ENCODE measurements at regions of chr1 and their contacts with region 1.

Region 1: GRCh38 chr1:166197141-166197540 is 30.3 kb upstream of the FAM78B start:
- DNase-seq: peak; percentile 35
- H3K4me3 Mint-ChIP-seq: no peak overlapping the region
- H3K27ac Mint-ChIP-seq: peak overlapping the region; percentile 7
- H3K4me1 Mint-ChIP-seq: peaks cover 16% of the 10 kb centered on the region
- H3K27me3 Mint-ChIP-seq: peaks cover 12% of the 10 kb centered on the region
- CTCF ChIP-seq: no peak

Region 2: GRCh38 chr1:166029196-166029945 is 167.8 kb before region 1 on chr1:
- CTCF ChIA-PET with region 1: no interaction called
- intact Hi-C with region 1: no loop called
- DNase-seq: no peak
- H3K4me3 Mint-ChIP-seq: no peak overlapping the region
- H3K27ac Mint-ChIP-seq: no peak overlapping the region
- H3K4me1 Mint-ChIP-seq: no peaks in the 10 kb centered on the region
- H3K27me3 Mint-ChIP-seq: peaks cover 77% of the 10 kb centered on the region
- CTCF ChIP-seq: no peak

Region 3: GRCh38 chr1:166127003-166127402 is 70.1 kb before region 1 on chr1:
- CTCF ChIA-PET with region 1: no interaction called
- intact Hi-C with region 1: no loop called
- DNase-seq: no peak
- H3K4me3 Mint-ChIP-seq: no peak overlapping the region
- H3K27ac Mint-ChIP-seq: no peak overlapping the region
- H3K4me1 Mint-ChIP-seq: no peaks in the 10 kb centered on the region
- H3K27me3 Mint-ChIP-seq: no peaks in the 10 kb centered on the region
- CTCF ChIP-seq: no peak

Region 4: GRCh38 chr1:166166695-166167571 is 30.2 kb before region 1 on chr1 and contains the start of gene FAM78B:
- CTCF ChIA-PET with region 1: no interaction called
- intact Hi-C with region 1: loop called (anchors 1 kb)
- DNase-seq: peak; percentile 79
- H3K4me3 Mint-ChIP-seq: peak within 1 kb of the TSS; percentile 77
- H3K27ac Mint-ChIP-seq: peak within 1 kb of the TSS; percentile 62
- H3K4me1 Mint-ChIP-seq: peaks cover 8% of the 10 kb centered on the region
- H3K27me3 Mint-ChIP-seq: peaks cover 27% of the 10 kb centered on the region
- CTCF ChIP-seq: no peak
- total RNA-seq, gene FAM78B: 1.9 and 4.9 TPM in 2 replicates

Measured in Calu3 (cell line).